Right ventricle myocardium inferior (tissue), 1 donor: ENCODE measurements at regions of chr2 and their contacts with region 1.

Region 1: GRCh38 chr2:11234309-11234708 is 79.0 kb downstream of the SLC66A3 start:
- DNase-seq: no peak
- ATAC-seq: no peak

Region 2: DNA sequence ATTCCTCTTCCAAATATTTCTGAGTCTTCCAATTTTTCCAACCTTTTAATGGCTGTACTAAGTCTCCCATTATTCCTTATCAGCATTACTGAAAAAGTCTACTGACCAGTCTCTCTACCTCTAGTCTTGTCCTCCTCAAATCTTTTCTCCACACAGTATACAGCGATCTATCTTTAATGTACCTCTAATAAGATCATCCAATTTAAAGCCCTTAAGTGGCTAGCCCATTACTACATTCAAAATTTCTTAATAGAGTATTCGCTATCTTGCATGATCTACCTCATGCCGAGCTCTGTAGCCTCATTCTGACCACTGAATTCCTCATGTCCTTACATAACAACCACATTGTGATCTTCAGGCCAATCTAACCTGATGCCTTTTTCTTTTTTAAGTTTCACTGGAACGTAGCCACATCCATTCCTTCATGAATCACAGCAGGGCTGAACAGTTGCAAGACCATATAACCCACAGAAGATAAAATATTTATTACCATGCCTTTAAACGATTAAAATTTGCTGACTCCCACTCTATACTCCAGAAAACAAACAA is 21.1 kb before region 1 on chr2:
- intact Hi-C with region 1: no loop called
- DNase-seq: no peak
- ATAC-seq: no peak

Region 3: DNA sequence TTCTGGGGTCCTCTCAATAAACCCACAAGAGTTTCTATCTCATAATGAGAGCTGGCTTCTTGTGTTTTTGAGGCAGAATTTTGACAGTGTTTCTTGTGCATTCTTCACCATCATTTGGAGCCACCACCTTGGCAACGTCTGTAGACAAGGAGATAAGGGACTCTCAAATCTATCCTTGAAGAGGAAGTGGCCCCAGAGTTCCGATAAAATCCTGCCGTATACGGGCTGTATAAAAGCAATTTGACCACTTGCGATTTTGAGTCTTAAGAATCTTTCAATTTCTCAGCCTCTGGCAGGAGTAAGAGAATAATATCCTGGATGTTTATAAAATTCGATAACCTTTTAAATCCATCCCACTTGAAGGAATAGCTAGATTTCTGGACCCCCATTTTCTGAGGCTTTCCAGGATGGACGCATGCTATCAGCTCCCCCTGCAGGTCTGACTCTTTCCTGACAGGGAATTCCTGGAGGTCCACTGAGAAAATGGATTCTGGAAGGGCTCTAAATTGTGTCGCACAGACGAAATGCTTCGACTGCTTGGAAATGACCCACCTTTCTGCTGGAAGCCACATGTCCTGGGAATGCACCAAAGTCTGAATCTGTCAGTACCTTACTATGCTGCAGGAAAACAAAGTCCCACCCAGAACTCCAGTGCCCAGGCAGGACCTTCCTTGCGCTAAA is 177.6 kb after region 1 on chr2:
- intact Hi-C with region 1: loop called (anchors 1 kb)
- DNase-seq: no peak
- ATAC-seq: peak; percentile 62

Region 4: DNA sequence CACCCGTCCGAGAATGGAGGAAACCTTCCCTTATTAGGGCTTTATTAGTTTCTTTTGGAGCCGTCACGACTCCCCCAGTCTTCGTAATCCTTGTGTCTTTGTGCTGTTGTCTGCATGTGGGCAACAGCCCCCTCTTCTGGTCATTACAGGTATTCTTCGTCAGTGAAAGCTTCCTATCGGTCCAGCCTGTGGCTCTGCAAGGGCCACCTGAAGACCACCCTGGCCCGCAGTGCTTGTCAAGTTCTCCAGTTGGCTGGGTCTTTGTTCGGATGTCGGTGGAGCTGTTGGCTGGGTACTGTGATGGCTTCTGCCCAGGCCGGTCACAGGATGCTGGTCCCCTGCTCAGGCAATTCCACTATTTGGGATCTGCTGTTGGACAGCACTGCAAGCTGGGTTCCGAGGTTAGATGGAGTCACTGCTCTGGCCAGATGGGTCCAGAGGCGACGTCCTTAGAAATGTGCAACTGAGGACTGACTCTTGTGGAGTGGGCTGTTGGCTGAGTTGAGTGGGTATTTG is 212.5 kb after region 1 on chr2:
- intact Hi-C with region 1: loop called (anchors 1 kb)
- DNase-seq: no peak
- ATAC-seq: peak; percentile 62